HEK293T (cell line): ENCODE measurements at regions of chr2 and their contacts with region 1.

Region 1: DNA sequence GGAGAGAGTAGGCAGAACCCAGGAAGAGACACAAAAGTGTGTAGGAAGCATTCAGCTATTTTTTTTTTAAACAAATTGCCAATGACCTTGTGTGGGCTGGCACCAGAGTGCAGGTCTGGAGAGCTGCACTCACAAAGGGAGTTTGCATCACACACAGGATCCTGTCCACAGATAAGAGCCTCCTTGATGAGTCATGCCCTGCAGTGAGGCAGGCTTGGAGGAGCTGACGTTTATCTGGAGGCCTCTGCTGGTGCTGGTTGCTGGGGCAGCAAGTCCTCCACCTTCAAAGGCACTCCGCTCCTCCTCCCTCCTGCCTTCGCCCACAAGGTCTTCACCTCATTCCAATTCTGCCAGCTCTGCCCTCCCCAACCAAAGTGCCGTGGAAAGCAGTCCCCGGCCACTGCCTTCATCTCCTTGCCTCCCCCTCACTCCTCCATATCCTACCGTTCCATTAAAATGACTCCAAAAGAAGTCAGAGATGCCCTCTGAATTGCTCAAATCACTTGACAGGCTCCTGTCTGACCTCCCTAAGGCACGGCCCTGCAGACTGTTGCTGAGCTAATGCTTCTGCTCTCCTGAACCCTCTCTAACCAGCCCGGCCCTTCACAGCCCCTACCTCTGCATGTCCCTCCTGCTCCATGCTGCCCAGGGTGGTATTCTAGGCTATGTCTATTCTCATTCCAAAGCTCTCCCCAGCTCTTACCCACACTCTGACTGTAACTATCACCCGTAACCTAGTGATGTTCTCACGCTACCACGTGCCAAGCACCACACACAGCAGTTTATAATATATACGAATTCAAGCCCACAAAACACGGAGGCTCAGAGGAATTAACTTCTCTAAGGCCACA is 31.0 kb downstream of the LONRF2 start:
- DNase-seq: peak; percentile 37

Region 2: DNA sequence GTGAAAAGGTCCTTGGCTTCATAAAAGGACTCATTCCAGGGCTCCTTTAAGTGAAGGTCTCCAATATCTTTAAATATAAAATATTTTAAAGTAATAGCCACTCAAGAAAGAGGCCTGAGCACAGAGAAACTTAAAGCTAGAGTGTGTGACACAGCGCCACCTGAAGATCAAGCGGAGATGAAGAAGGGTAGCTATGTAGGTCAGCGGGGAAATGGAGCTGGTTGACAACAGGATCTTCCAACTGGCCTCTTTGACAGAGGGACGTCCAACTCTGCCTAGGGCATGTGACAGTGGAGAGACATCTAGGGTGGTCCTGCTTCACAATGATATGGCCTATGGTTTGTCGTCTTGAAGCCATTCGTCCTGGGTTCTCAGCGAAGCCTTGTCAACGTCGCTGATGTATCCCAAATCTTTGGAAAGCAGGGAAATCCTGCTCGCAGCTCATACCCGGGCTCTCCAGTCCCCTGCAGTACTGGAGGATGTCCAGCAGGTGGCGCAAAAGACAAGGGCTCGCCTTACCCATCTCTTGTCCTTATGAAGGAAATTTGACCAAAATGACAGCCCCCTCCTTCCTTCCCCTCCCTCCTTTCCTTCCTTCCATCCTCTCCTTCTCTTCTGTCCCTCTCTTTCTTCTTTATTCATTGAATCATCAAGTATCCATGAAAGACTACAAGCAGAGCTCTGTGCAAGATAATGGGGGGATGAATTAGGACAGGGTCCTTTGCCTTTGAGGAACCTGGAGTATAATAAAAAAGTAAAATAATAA is 28.6 kb before region 1 on chr2:
- CTCF ChIA-PET with region 1: interaction called, 11 read pairs
- POLR2A ChIA-PET with region 1: interaction called, 3 read pairs
- DNase-seq: peak; percentile 79

Region 3: DNA sequence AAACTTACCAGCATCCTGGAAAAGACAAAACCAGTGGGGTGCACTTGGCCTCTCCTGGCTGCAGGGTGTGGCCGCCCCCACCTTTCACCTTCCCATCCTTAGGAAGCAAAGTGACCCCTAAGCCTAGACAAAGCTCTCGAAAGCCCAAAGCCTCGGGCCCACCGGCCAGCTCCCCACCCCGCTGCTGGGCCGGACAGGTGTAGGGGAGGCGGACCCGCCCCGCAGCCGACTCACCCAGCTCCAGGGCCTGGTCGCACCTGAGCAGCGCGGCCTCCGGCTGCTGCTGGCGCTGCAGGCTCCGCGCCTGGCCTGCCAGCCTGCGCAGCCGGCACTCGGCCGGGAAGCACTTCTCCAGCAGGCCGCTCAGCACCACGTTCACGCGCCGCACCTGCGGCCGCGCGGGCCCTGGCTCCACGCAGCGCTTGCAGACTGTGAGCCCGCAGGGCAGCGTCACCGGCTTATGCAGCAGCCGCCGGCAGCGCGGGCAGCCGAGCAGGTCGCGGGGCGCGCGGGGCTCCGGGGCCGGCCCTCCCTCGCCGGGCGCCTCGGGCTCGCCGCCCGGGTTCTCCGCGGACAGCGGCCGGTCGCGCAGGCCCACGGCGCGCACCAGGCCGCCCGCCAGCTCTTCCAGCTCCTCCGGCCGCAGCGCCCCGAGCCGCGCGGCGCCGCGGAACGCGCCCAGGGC is 30.0 kb after region 1 on chr2:
- CTCF ChIA-PET with region 1: no interaction called
- POLR2A ChIA-PET with region 1: interaction called, 16 read pairs
- DNase-seq: peak; percentile 71

Region 4: GRCh38 chr2:100381240-100381639 is 89.9 kb after region 1 on chr2:
- CTCF ChIA-PET with region 1: interaction called, 12 read pairs
- POLR2A ChIA-PET with region 1: no interaction called
- DNase-seq: peak; percentile 73